Right ventricle myocardium inferior (tissue), 1 donor: ENCODE measurements at regions of chr9 and their contacts with region 1.

Region 1: DNA sequence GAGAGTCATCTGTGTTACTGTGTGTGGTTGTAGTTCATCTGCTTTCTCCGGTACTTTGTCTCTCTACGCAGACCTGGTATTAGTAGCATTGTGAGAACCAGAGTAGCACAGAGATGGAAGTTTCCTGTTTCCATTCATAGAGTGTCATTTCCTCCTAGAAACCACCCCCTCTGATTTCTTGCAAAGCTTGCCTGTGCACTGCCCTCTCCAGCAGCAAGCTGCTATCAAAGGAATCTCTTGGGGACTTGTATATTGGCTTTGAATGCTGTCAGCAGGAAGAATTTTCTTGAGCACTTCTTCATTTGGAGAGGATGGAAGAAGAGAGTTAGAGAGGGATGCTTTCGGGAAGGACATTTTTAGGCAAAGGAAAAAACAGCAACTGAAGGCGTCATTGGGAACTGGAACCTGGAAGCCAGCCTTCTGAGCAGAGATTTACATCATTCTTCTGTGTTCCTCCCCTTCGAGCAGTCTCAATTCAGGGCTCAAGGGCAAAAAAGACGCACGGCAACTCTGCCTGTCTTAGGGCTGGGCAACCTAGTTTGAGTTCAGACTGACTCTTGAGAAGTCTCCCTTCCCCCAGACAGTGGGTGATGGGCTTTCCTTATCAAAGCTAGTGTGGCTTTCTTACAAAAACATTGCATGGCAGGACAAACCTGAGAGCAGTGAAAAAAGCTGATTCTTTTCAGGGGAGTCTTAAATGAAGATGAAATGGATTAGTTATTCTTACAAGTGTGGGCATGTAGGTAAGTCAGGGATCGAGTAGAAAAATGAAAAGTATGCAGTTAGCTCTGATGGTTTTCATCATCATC is 226.3 kb downstream of the AOPEP start:
- DNase-seq: no peak
- ATAC-seq: peak; percentile 42

Region 2: DNA sequence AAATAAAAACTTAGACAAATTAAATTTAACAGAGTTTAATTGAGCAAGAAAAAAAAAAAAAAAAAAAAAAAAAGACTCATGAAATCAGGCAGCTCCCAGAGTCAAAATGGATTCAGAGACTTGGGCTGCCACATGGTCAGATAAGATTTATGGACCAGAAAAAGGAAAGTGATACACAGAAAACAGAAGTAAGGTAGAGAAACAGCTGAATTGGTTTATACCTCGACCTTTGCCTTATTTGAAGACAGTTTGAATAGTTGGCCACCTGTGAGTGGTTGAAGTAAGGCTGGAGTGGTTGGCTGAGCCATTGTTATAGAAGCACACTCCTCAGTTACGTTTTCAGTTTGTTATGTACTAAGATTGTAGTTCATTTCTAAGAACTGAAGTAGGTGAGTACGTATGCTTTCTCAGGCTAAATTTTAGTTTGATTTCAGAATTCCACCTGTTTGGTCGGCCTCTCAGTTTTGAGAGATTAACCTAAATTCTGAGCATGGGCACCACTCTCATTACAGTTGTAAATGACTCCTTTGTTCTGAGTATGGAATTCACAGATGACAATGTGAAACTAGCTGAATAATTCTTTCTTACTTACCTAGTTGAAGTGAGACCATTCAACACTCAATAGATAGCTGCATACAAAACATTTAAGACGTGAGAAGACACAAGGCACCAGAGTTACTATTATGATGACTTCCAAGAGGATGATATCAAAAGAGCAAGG is 77.3 kb before region 1 on chr9:
- intact Hi-C with region 1: no loop called
- DNase-seq: no peak
- ATAC-seq: no peak

Region 3: DNA sequence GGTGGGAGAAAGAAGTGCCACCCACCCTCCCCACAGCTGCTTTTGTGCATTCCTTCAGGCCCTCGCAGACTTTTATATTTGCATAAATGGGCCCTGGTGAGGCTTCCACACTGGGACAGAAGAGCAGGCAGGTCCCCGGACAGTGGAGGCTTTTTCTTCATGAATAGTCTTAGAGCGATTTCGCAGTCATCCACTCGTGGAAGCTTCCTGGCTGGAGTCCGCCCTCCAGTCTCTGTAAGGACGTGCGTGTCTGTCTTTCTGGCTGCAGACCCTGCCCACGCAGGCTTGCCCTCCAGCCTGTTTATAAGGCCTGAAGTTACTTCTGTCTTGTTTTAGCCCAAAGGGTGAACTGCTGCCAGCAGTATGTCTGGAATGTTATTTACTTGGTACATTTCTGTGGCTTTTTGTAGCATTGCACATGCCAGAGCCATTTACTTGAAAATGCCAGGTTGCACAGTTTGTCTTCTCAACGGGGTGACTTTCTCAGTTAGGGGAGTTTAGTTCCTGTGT is 30.6 kb before region 1 on chr9:
- intact Hi-C with region 1: no loop called
- DNase-seq: no peak
- ATAC-seq: no peak

Region 4: GRCh38 chr9:94996641-94997040 is 43.9 kb after region 1 on chr9:
- intact Hi-C with region 1: loop called (anchors 2 kb)
- DNase-seq: no peak
- ATAC-seq: peak; percentile 37